ENCODE measurements at regions of chr7 and their contacts with region 1.

Region 1: GRCh38 chr7:151642746-151643145 is 123.1 kb upstream of the RHEB start:
- DNase-seq: no peak
- ATAC-seq: no peak
- H3K4me3 Mint-ChIP-seq: no peak overlapping the region
- H3K27ac Mint-ChIP-seq: no peak overlapping the region
- H3K4me1 Mint-ChIP-seq: peaks cover 5% of the 10 kb centered on the region
- H3K27me3 Mint-ChIP-seq: no peaks in the 10 kb centered on the region
- CTCF ChIP-seq: no peak

Region 2: GRCh38 chr7:151621961-151622360 is 20.8 kb before region 1 on chr7:
- CTCF ChIA-PET with region 1: no interaction called
- POLR2A ChIA-PET with region 1: no interaction called
- intact Hi-C with region 1: no loop called
- DNase-seq: no peak
- ATAC-seq: no peak
- H3K4me3 Mint-ChIP-seq: no peak overlapping the region
- H3K27ac Mint-ChIP-seq: no peak overlapping the region
- H3K4me1 Mint-ChIP-seq: peaks cover 21% of the 10 kb centered on the region
- H3K27me3 Mint-ChIP-seq: no peaks in the 10 kb centered on the region
- CTCF ChIP-seq: no peak

Region 3: GRCh38 chr7:151631968-151632749 is 10.6 kb before region 1 on chr7:
- CTCF ChIA-PET with region 1: interaction called, 15 read pairs
- POLR2A ChIA-PET with region 1: interaction called, 3 read pairs
- intact Hi-C with region 1: no loop called
- DNase-seq: peak; percentile 84
- ATAC-seq: peak; percentile 80
- H3K4me3 Mint-ChIP-seq: peak overlapping the region; percentile 88
- H3K27ac Mint-ChIP-seq: peak overlapping the region; percentile 95
- H3K4me1 Mint-ChIP-seq: peaks cover 27% of the 10 kb centered on the region
- H3K27me3 Mint-ChIP-seq: no peaks in the 10 kb centered on the region
- CTCF ChIP-seq: peak; percentile 23